ENCODE measurements at regions of chr2 and their contacts with region 1.

Region 1: DNA sequence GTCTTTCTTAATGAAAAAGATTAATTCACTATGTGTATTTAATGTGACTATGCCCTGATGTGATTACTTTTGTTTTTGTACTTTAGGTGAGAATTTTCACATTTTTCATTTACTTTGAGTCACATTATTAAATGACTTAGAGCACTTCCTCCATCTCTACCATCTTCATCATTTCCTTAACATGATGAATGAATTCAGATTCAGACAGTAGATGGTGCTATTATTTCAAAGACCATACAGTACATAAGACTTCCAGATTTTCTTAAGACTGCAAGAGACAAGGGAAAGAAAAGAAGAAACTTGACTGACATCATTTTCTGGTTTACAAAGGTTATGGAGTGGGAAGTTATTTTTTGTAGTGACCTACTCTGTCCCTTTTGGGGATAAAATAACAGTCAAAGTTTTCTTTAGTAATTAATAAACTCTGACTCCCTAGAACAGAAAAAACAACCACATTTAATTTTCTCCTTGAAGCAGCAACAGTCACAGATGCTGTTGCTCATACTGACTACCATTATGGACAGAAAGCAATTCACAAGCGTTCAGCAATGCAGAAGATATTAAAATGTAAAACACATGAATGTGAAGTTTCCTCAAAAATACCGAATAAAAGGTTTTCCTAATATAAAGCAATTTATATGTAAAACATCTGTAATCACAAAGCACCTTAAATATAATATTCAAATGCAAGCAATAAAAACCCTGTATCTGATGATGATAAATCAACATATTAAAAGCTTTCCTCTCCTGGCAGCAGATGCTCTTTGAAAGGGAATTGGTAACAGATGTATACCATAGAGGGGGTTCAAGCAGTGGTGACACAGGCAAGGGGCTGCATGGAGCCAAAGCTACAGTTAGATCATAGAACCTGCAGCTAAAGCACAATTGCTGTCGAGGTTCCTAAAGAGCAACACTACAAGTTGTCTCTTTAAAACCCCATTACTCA is 1010.9 kb upstream of the NXPH2 start:
- DNase-seq: no peak
- H3K4me3 ChIP-seq: no peak overlapping the region
- H3K27ac ChIP-seq: no peak overlapping the region
- H3K4me1 ChIP-seq: no peaks in the 10 kb centered on the region
- H3K27me3 ChIP-seq: no peaks in the 10 kb centered on the region
- CTCF ChIP-seq: peak in 3 of 6 experiments; percentile 5 to 28 (median 10)
- POLR2A ChIP-seq: no peak

Region 2: GRCh38 chr2:140863713-140864112 is 1072.6 kb after region 1 on chr2:
- intact Hi-C with region 1: loop called in 1 of 2 experiments (anchors 10 kb)
- DNase-seq: no peak
- H3K4me3 ChIP-seq: no peak overlapping the region
- H3K27ac ChIP-seq: no peak overlapping the region
- H3K4me1 ChIP-seq: no peaks in the 10 kb centered on the region
- H3K27me3 ChIP-seq: no peaks in the 10 kb centered on the region
- CTCF ChIP-seq: peak; percentile 41 to 63 (median 54)
- POLR2A ChIP-seq: no peak